ENCODE measurements at regions of chr4 and their contacts with region 1.

Region 1: GRCh38 chr4:26410385-26411293 is 79.6 kb downstream of the CCKAR start:
- DNase-seq: no peak
- H3K4me3 Mint-ChIP-seq: no peak overlapping the region
- H3K27ac Mint-ChIP-seq: no peak overlapping the region
- H3K4me1 Mint-ChIP-seq: peaks cover 24% of the 10 kb centered on the region
- H3K27me3 Mint-ChIP-seq: no peaks in the 10 kb centered on the region

Region 2: GRCh38 chr4:25970226-25970675 is 440.4 kb before region 1 on chr4:
- intact Hi-C with region 1: no loop called
- DNase-seq: no peak
- H3K4me3 Mint-ChIP-seq: no peak overlapping the region
- H3K27ac Mint-ChIP-seq: no peak overlapping the region
- H3K4me1 Mint-ChIP-seq: no peaks in the 10 kb centered on the region
- H3K27me3 Mint-ChIP-seq: peaks cover 7% of the 10 kb centered on the region

Region 3: GRCh38 chr4:25993395-25994185 is 417.0 kb before region 1 on chr4:
- intact Hi-C with region 1: loop called (anchors 1 kb)
- DNase-seq: no peak
- H3K4me3 Mint-ChIP-seq: no peak overlapping the region
- H3K27ac Mint-ChIP-seq: no peak overlapping the region
- H3K4me1 Mint-ChIP-seq: peaks cover 14% of the 10 kb centered on the region
- H3K27me3 Mint-ChIP-seq: no peaks in the 10 kb centered on the region

Region 4: GRCh38 chr4:26028793-26029567 is 381.7 kb before region 1 on chr4:
- intact Hi-C with region 1: loop called (anchors 2 kb)
- DNase-seq: peak; percentile 59
- H3K4me3 Mint-ChIP-seq: no peak overlapping the region
- H3K27ac Mint-ChIP-seq: peak overlapping the region; percentile 67
- H3K4me1 Mint-ChIP-seq: peaks cover 25% of the 10 kb centered on the region
- H3K27me3 Mint-ChIP-seq: peaks cover 2% of the 10 kb centered on the region

Region 5: DNA sequence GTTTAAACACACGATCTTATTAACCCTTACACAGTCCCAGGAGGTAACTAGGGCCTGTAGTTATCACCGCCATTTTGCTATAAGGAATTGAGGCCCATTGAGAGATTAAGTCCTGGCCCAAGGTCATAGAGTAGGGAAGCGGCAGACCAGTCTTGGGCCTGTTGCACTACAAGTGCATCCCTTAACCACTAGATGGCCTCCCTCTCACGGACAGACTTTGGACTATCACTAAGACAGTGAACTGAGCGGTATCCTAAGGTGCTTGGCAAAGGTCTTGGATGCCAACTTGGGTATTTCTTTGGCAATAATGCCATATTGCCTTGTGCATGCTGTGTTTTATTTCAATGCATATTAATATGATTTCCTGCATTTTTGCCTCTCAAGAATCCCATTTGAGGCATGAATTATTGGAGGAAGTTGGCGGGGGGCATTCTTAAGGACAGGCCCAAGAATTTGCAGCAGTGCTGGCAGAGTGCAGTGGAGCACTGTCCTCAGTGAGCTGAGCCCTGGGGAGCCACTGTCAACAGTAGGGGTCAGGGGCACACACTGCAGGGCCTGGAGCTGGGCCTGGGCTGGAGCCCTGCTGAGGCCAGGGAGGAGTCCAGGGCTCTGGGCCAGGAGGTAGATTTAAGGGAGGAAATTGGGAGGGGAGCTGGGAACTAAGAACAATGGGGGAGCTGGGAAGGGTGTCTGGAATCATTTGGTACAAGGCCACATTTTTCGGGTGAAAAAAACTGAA is 349.2 kb before region 1 on chr4:
- intact Hi-C with region 1: loop called (anchors 10 kb)
- DNase-seq: no peak
- H3K4me3 Mint-ChIP-seq: no peak overlapping the region
- H3K27ac Mint-ChIP-seq: no peak overlapping the region
- H3K4me1 Mint-ChIP-seq: peaks cover 22% of the 10 kb centered on the region
- H3K27me3 Mint-ChIP-seq: no peaks in the 10 kb centered on the region

Region 6: GRCh38 chr4:26141911-26142638 is 268.6 kb before region 1 on chr4:
- intact Hi-C with region 1: loop called (anchors 5 kb)
- DNase-seq: no peak
- H3K4me3 Mint-ChIP-seq: peak overlapping the region; percentile 22
- H3K27ac Mint-ChIP-seq: peak overlapping the region; percentile 89
- H3K4me1 Mint-ChIP-seq: peaks cover 73% of the 10 kb centered on the region
- H3K27me3 Mint-ChIP-seq: no peaks in the 10 kb centered on the region

Region 7: GRCh38 chr4:26299254-26299882 is 111.3 kb before region 1 on chr4:
- intact Hi-C with region 1: no loop called
- DNase-seq: no peak
- H3K4me3 Mint-ChIP-seq: peak overlapping the region; percentile 39
- H3K27ac Mint-ChIP-seq: peak overlapping the region; percentile 81
- H3K4me1 Mint-ChIP-seq: peaks cover 45% of the 10 kb centered on the region
- H3K27me3 Mint-ChIP-seq: no peaks in the 10 kb centered on the region

Region 8: DNA sequence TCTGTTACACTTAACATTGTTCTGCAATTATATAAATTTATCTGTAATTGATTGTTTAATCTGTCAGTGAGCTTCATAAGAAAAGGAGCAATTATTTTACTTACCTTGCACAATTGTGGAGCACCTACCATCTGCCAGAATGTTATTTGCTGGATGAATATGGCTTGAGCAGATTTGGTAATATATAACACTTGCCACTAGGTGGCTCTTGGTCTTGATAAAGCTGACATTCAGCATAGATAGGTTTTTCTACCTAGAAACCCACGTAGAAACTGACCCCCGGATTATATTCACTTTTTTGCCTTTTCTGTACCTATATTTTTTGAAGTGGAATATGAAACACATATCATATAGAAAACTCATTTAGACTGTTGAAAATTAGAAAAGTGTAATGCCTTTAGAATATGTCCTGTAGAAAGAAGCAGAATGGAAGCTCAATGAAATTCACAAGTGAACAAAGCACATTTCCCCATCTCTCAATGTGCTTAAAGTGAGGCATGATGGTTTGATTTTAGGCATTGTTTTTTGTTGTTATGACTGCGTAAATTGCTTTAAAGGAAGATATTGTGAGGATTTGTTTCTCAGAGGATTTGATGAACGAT is 80.4 kb before region 1 on chr4:
- intact Hi-C with region 1: loop called (anchors 1 kb)
- DNase-seq: no peak
- H3K4me3 Mint-ChIP-seq: peak overlapping the region; percentile 4
- H3K27ac Mint-ChIP-seq: peak overlapping the region; percentile 10
- H3K4me1 Mint-ChIP-seq: peaks cover 59% of the 10 kb centered on the region
- H3K27me3 Mint-ChIP-seq: no peaks in the 10 kb centered on the region

Region 9: DNA sequence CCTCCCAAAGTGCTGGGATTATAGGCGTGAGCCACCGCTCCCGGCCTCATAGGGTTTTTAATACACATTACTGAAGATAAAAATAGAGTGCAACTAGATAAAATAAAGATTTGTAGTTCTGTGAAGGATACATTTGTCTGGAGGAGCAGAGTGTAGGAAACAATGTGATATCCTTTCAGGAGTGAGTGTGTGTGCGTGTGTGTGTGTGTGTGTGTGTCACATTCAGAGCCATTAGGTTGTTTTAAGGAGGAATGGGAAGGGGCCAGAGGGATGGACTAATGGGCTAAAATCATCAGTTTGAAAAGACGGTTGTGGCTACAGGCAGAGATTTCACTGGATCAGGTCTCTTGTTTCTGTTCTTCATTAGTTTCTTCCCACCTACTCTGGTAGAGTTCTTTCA is 49.8 kb before region 1 on chr4:
- intact Hi-C with region 1: no loop called
- DNase-seq: no peak
- H3K4me3 Mint-ChIP-seq: peak overlapping the region; percentile 22
- H3K27ac Mint-ChIP-seq: peak overlapping the region; percentile 56
- H3K4me1 Mint-ChIP-seq: peaks cover 41% of the 10 kb centered on the region
- H3K27me3 Mint-ChIP-seq: no peaks in the 10 kb centered on the region

Region 10: DNA sequence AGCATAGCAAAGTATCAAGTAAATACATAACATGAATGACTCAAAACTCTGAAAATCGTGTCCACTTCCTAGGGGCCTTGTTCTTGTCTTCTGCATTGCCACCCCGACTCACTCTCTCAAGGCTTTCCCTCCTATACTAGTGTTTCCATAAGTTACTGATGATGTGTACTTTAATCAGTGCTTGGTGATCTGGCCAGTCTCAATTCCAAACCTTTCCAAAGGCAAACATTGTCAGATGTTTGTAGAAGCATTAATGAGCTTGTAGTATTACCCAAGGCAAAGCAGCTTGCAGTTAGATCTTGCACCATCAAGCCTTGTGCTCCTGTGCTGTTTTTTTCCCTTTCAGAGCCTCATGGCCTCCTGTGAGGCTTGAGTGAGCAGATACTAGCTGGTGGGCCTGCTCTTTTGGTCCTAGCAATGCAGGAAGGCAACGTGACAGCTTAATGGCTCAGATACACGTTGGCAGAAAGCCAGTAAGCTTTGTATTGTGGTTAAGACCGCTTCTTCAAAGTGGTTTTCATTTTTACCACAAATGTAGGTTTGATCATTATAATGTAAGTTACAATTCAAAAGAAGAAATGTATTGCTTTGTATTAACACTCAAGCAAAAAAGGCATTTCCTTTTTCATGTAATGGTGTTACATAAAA is 38.0 kb before region 1 on chr4:
- intact Hi-C with region 1: loop called (anchors 5 kb)
- DNase-seq: peak; percentile 58
- H3K4me3 Mint-ChIP-seq: peak overlapping the region; percentile 3
- H3K27ac Mint-ChIP-seq: peak overlapping the region; percentile 56
- H3K4me1 Mint-ChIP-seq: peaks cover 72% of the 10 kb centered on the region
- H3K27me3 Mint-ChIP-seq: no peaks in the 10 kb centered on the region

Measured in activated T-helper 2 cell treated with anti-CD3 and anti-CD28 coated beads, Interferon-gamma antibody, Interleukin-2, Interleukin-4, amounts not matched to agents 10 μg/mL and 5 μg/mL and 100 μg/mL, durations not matched to agents 14 hours and 24 hours and 36 hours (primary cell).